IMR-90 (cell line): ENCODE measurements at regions of chr6 and their contacts with region 1.

Region 1: GRCh38 chr6:31971993-31972708 is at the start of gene DXO:
- DNase-seq: peak; percentile 99
- ATAC-seq: peak; percentile 91
- H3K4me3 ChIP-seq: peak within 1 kb of the TSS; percentile 60
- H3K27ac ChIP-seq: peak within 1 kb of the TSS; percentile 93
- H3K4me1 ChIP-seq: peaks cover 11% of the 10 kb centered on the region
- H3K27me3 ChIP-seq: no peaks in the 10 kb centered on the region
- CTCF ChIP-seq: no peak
- POLR2A ChIP-seq: peak; percentile 71
- RAD21 ChIP-seq: 0 out of 2 replicates have a peak, but pooled peaks have one; percentile 1
- total RNA-seq, gene DXO: 7.8 and 9.3 TPM in 2 replicates

Region 2: GRCh38 chr6:31945507-31946369 is 26.4 kb before region 1 on chr6 and contains the start of gene CFB:
- CTCF ChIA-PET with region 1: no interaction called
- POLR2A ChIA-PET with region 1: no interaction called
- dilution Hi-C with region 1: no loop called
- in situ Hi-C with region 1: no loop called
- intact Hi-C with region 1: no loop called
- DNase-seq: peak; percentile 86
- ATAC-seq: peak; percentile 95
- H3K4me3 ChIP-seq: peak within 1 kb of the TSS; percentile 3; the same call in 1 of the 2 replicates
- H3K27ac ChIP-seq: peak within 1 kb of the TSS; percentile 64
- H3K4me1 ChIP-seq: peaks cover 22% of the 10 kb centered on the region
- H3K27me3 ChIP-seq: no peaks in the 10 kb centered on the region
- CTCF ChIP-seq: no peak
- POLR2A ChIP-seq: no peak
- RAD21 ChIP-seq: no peak
- total RNA-seq, gene CFB: 1.4 and 1.8 TPM in 2 replicates

Region 3: DNA sequence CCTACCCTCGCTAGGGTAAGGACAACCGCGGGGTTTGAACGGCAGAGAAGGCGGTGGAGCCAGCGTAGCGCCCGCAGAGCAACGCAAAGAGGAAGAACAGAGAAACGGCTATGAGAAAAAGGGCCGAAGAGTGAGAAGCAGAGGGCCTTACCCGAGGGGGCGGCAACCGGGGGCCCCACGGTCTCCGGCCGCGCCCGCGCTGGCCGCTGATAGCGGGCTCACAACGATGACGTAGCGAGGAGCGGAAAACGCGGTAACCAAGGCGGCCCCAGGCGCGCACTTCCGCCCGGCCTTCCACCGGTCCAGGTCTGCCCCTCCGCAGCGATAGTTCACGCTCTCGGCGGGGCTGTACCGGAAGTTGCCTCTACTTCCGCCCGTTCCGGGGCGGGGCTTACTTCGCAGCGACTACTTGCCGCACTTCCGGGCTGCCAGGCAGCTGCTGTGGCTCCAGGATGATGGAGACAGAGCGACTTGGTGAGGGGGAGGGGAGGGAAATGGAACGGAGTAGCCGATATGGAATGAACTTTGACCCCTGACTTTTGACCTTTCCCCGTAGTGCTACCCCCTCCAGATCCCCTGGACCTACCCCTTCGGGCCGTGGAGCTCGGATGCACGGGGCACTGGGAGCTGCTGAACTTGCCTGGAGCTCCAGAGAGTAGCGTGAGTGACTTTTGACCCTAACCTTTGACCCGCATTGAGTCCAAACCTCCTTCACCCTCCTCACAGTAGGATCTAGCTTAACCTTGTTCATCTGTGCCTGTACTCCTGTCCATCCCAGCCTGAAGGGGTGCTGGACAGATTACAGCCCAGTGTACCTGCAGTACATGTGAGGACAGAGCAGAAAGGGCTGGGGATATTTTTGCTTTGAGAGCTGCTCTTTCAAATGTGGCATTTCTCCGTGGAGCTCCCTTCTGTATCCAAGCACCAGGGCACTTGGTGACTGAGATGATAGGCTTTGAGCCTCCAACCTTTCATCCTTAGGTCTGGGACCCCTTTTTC is 13.1 kb before region 1 on chr6 and contains the starts of genes NELFE and SKIC2:
- CTCF ChIA-PET with region 1: no interaction called
- POLR2A ChIA-PET with region 1: interaction called, 10 read pairs
- dilution Hi-C with region 1: no loop called
- in situ Hi-C with region 1: no loop called
- intact Hi-C with region 1: loop called (anchors 1 kb)
- DNase-seq: peak; percentile 98
- ATAC-seq: peak; percentile 99
- H3K4me3 ChIP-seq: peak within 1 kb of the TSS; percentile 75
- H3K27ac ChIP-seq: peak within 1 kb of the TSS; percentile 74
- H3K4me1 ChIP-seq: peaks cover 7% of the 10 kb centered on the region; the same call in 1 of the 2 replicates
- H3K27me3 ChIP-seq: no peaks in the 10 kb centered on the region
- CTCF ChIP-seq: no peak
- POLR2A ChIP-seq: peak; percentile 64
- RAD21 ChIP-seq: peak; percentile 9; the same call in 1 of the 2 replicates
- total RNA-seq, gene NELFE: 76.0 and 90.8 TPM in 2 replicates
- total RNA-seq, gene SKIC2: 30.6 and 34.7 TPM in 2 replicates

Region 4: GRCh38 chr6:32118782-32119628 is 146.9 kb after region 1 on chr6:
- CTCF ChIA-PET with region 1: no interaction called
- POLR2A ChIA-PET with region 1: no interaction called
- dilution Hi-C with region 1: no loop called
- in situ Hi-C with region 1: loop called (anchors 10 kb)
- intact Hi-C with region 1: no loop called
- DNase-seq: peak; percentile 85
- ATAC-seq: peak; percentile 78
- H3K4me3 ChIP-seq: no peak overlapping the region
- H3K27ac ChIP-seq: peak overlapping the region; percentile 36; the same call in 1 of the 2 replicates
- H3K4me1 ChIP-seq: peaks cover 11% of the 10 kb centered on the region
- H3K27me3 ChIP-seq: no peaks in the 10 kb centered on the region
- CTCF ChIP-seq: peak; percentile 98
- POLR2A ChIP-seq: peak; percentile 57; the same call in 1 of the 2 replicates
- RAD21 ChIP-seq: peak; percentile 98